Common myeloid progenitor, CD34-positive (primary cell): ENCODE measurements at regions of chr2 and their contacts with region 1.

Region 1: DNA sequence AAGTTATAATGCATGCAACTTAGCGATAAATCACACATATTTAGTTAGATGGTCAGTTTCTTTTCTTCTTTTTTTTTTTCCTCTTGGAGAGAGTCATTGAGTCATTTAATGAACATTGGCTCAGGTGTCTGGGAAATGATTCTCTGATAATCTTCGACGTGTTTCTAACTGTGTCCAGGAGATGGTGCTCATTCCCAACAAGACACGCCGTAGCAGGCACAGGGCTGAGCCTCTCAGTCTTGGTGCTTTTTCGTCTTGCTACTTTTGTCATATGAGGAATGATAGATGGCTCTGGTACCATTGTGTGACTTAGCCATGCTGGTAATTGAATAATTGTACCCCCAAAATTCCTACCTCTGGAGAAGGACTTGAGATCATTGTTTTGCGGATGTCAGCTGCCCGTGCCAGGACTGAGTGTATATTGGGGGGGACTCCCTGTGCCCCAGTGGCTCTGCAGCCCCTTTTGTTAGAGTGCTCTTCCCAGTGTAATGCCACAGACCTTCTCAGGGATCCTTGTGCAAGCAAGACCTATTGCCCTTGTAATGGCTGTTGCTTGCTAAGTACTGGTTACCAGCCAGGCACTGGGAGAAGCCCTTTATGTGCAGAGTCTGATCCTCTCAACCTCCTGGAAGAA is 107.6 kb upstream of the CYRIA start:
- DNase-seq: peak; percentile 52 to 76 (median 70)
- H3K4me3 ChIP-seq: no peak overlapping the region
- H3K27ac ChIP-seq: no peak overlapping the region
- H3K4me1 ChIP-seq: no peaks in the 10 kb centered on the region
- H3K27me3 ChIP-seq: peaks cover 0 to 3% (median 0%) of the 10 kb centered on the region in 5 experiments

Region 2: DNA sequence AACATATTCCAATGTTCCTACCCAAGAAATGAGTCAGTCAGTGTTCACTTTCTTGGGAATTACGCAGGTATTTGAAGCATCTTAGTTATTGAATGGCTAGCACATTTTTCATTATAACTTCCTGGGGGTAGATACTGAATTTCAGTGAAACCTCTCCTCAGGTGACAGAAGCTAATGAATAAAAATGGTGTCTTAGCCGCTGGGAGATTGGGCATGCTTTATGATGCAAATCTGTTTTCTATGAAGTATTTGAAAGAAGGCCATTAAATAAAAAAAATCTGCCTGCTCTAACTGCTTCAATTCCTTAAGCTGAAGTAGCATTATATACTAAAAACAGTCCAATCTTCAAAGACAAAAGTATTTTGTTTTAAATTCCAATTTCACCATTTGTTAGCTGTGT is 25.3 kb after region 1 on chr2:
- CTCF ChIA-PET with region 1: no interaction called
- POLR2A ChIA-PET with region 1: no interaction called
- DNase-seq: no peak
- H3K4me3 ChIP-seq: no peak overlapping the region
- H3K27ac ChIP-seq: no peak overlapping the region
- H3K4me1 ChIP-seq: no peaks in the 10 kb centered on the region
- H3K27me3 ChIP-seq: no peaks in the 10 kb centered on the region

Region 3: GRCh38 chr2:16840496-16841172 is 67.4 kb after region 1 on chr2:
- CTCF ChIA-PET with region 1: no interaction called
- POLR2A ChIA-PET with region 1: no interaction called
- DNase-seq: no peak
- H3K4me3 ChIP-seq: no peak overlapping the region
- H3K27ac ChIP-seq: no peak overlapping the region
- H3K4me1 ChIP-seq: peaks cover 0 to 19% (median 7%) of the 10 kb centered on the region in 4 experiments
- H3K27me3 ChIP-seq: no peaks in the 10 kb centered on the region

Region 4: GRCh38 chr2:17309741-17310339 is 536.6 kb after region 1 on chr2:
- CTCF ChIA-PET with region 1: interaction called, 56 read pairs
- POLR2A ChIA-PET with region 1: no interaction called
- DNase-seq: peak; percentile 61 to 77 (median 77)
- H3K4me3 ChIP-seq: no peak overlapping the region
- H3K27ac ChIP-seq: no peak overlapping the region
- H3K4me1 ChIP-seq: peaks cover 0 to 3% (median 0%) of the 10 kb centered on the region in 4 experiments
- H3K27me3 ChIP-seq: no peaks in the 10 kb centered on the region

Region 5: DNA sequence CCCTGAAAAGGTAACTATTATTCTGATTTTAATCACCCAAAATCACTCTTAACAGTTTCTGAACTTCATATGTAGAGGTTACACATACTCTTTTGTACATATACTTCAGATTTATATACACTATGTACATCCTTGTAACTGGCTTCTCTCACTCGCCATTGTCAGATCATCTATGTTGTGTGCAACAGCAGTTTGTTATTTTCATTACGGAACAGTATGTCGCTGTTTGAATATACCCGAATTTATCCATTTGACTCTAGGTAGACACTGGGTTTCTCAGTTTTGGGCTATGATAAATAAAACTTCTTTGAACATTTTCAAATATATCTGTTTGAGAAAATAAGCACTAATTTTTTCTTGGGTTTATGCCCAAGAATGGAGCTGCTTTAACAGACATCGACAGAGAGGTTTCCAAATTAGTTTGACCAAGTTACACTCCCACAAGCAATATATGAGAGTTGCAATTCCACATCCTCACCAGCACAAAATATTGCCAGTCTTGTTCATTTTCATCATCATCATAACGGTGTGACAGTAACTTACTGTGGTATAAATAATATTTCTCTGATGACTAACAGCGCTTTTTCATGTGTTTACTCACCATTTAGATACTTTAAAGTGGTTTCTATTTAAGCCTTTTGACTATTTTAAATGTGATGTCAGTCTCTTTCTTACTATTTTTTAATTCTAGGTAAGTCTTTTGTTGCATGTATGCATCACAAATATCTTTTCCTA is 899.6 kb after region 1 on chr2:
- CTCF ChIA-PET with region 1: interaction called, 12 read pairs
- POLR2A ChIA-PET with region 1: no interaction called
- DNase-seq: no peak
- H3K4me3 ChIP-seq: no peak overlapping the region
- H3K27ac ChIP-seq: no peak overlapping the region
- H3K4me1 ChIP-seq: no peaks in the 10 kb centered on the region
- H3K27me3 ChIP-seq: no peaks in the 10 kb centered on the region